CD8-positive, alpha-beta T cell (primary cell): ENCODE measurements at regions of chr14 and their contacts with region 1.

Region 1: DNA sequence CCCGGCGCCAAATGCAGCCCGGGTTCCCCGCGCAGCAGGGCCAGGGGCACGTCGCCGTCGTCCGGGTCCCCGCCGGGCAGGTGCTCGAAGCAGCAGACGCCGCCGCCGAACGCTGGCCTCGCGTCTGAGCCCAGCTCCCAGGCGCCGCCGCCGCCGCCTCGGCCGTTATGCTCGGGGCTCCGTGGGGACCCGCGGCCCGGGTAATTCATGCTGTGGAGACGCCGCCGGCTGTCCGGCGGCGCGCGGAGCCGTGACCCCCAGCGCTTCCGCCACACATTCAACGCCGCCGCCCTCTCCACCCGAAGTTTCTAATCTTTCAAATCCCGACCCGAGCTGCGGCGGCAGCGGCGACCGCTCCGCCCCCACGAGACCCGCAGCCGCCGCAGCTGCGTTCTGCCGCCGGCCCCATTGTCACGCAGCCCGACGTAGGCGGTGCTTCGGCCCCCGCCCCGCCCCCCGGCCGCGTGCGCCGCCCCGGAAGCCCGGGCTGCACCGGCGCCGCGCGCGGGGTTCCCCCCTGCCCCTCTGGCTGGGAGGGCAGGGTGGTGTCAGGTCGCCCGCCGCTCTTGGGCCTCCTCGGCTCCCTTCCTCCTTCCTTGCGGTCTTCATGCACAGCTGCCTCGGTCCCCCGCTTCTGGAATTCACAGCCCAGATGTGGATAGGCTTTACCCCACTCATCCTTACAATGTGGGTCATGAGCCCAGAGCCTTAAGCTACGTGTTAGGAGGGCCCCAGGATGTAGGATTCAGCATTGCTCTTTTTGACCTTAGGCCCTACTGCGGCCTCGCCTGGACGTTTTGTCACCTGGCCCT is at the start of gene DDHD1:
- DNase-seq: peak; percentile 73 to 93 (median 85)
- ATAC-seq: peak; percentile 85
- H3K4me3 ChIP-seq: peak within 1 kb of the TSS; percentile 86 to 93
- H3K4me3 Mint-ChIP-seq: peak within 1 kb of the TSS; percentile 99
- H3K27ac ChIP-seq: peak within 1 kb of the TSS; percentile 77 to 85
- H3K27ac Mint-ChIP-seq: peak within 1 kb of the TSS; percentile 99
- H3K4me1 ChIP-seq: peaks cover 33% of the 10 kb centered on the region
- H3K4me1 Mint-ChIP-seq: peaks cover 49% of the 10 kb centered on the region
- H3K27me3 ChIP-seq: no peaks in the 10 kb centered on the region
- H3K27me3 Mint-ChIP-seq: no peaks in the 10 kb centered on the region
- CTCF ChIP-seq: no peak
- total RNA-seq, gene DDHD1: 40.1 to 44.3 TPM

Region 2: GRCh38 chr14:52706724-52707706 is 446.1 kb before region 1 on chr14 and contains the start of gene PSMC6:
- CTCF ChIA-PET with region 1: no interaction called
- POLR2A ChIA-PET with region 1: no interaction called
- intact Hi-C with region 1: loop called in 1 of 2 experiments (anchors 10 kb)
- DNase-seq: peak; percentile 91 to 96 (median 95)
- ATAC-seq: peak; percentile 98
- H3K4me3 ChIP-seq: peak within 1 kb of the TSS; percentile 69 to 88
- H3K4me3 Mint-ChIP-seq: peak within 1 kb of the TSS; percentile 96
- H3K27ac ChIP-seq: peak within 1 kb of the TSS; percentile 66 to 84
- H3K27ac Mint-ChIP-seq: peak within 1 kb of the TSS; percentile 94
- H3K4me1 ChIP-seq: peaks cover 20% of the 10 kb centered on the region
- H3K4me1 Mint-ChIP-seq: peaks cover 33% of the 10 kb centered on the region
- H3K27me3 ChIP-seq: no peaks in the 10 kb centered on the region
- H3K27me3 Mint-ChIP-seq: no peaks in the 10 kb centered on the region
- CTCF ChIP-seq: no peak
- total RNA-seq, gene PSMC6: 108 to 122 TPM

Region 3: DNA sequence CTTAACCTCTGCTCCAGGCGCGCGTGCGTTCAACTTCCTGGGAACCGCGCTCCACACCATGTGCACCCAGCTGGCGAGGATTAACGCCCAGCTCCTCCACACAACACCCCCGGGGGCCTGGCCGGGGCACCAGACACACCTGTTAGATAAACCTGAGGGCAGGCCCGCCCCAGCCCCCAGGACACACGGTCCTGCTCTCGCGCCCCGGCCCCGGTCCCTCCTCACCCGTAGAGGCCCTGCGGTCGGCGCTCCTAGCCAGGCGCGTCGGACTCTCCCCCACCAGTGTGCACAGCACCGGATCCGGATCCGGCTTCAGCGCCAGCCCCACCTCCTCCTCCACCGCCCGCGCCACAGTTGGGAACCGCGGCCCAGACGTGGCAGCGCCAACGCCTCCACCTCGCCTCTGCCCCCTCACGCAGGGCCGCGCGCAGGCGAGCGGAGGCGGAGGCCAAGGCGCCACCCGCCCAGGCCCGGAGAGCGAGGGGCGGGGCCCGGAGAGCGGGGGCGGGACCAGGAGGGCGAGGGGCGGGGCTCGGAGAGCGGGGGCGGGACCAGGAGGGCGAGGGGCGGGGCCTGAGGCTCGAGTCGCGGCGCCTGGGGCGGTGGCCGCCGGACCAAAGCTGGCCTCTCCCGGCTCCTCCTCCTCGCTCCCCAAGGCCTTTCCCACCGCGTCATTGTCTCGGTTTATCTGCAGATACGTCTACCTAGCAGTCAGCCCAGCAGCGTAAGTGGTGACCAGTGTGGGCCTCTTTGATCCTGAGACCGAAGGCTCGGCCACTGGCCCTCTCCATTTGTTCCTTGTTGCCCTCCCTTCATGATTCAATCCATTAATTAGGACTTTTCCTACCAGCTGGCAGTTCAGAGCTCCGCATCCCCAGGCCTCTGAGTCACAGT is 361.6 kb before region 1 on chr14 and contains the start of gene GNPNAT1:
- CTCF ChIA-PET with region 1: no interaction called
- POLR2A ChIA-PET with region 1: no interaction called
- intact Hi-C with region 1: loop called (anchors 1 to 2 kb)
- DNase-seq: peak; percentile 80 to 97 (median 88)
- ATAC-seq: peak; percentile 96
- H3K4me3 ChIP-seq: peak within 1 kb of the TSS; percentile 78 to 85
- H3K4me3 Mint-ChIP-seq: peak within 1 kb of the TSS; percentile 93
- H3K27ac ChIP-seq: peak within 1 kb of the TSS; percentile 65 to 74
- H3K27ac Mint-ChIP-seq: peak within 1 kb of the TSS; percentile 89
- H3K4me1 ChIP-seq: peaks cover 20% of the 10 kb centered on the region
- H3K4me1 Mint-ChIP-seq: peaks cover 40% of the 10 kb centered on the region
- H3K27me3 ChIP-seq: no peaks in the 10 kb centered on the region
- H3K27me3 Mint-ChIP-seq: no peaks in the 10 kb centered on the region
- CTCF ChIP-seq: no peak
- total RNA-seq, gene GNPNAT1: 5.6 to 7.5 TPM

Region 4: GRCh38 chr14:53055003-53055402 is 98.1 kb before region 1 on chr14:
- CTCF ChIA-PET with region 1: interaction called, 14 read pairs
- POLR2A ChIA-PET with region 1: interaction called, 4 read pairs
- intact Hi-C with region 1: loop called in 1 of 2 experiments (anchors 5 kb)
- DNase-seq: peak in 2 of 9 experiments; percentile 48 to 60
- ATAC-seq: peak; percentile 55
- H3K4me3 ChIP-seq: no peak overlapping the region
- H3K4me3 Mint-ChIP-seq: no peak overlapping the region
- H3K27ac ChIP-seq: no peak overlapping the region
- H3K27ac Mint-ChIP-seq: peak overlapping the region; percentile 34
- H3K4me1 ChIP-seq: no peaks in the 10 kb centered on the region
- H3K4me1 Mint-ChIP-seq: no peaks in the 10 kb centered on the region
- H3K27me3 ChIP-seq: no peaks in the 10 kb centered on the region
- H3K27me3 Mint-ChIP-seq: no peaks in the 10 kb centered on the region
- CTCF ChIP-seq: peak; percentile 82

Region 5: GRCh38 chr14:53137568-53138203 is 15.4 kb before region 1 on chr14:
- CTCF ChIA-PET with region 1: interaction called, 3 read pairs
- POLR2A ChIA-PET with region 1: interaction called, 5 read pairs
- intact Hi-C with region 1: loop called in 1 of 2 experiments (anchors 2 kb)
- DNase-seq: no peak
- ATAC-seq: no peak
- H3K4me3 ChIP-seq: no peak overlapping the region
- H3K4me3 Mint-ChIP-seq: no peak overlapping the region
- H3K27ac ChIP-seq: no peak overlapping the region
- H3K27ac Mint-ChIP-seq: no peak overlapping the region
- H3K4me1 ChIP-seq: no peaks in the 10 kb centered on the region
- H3K4me1 Mint-ChIP-seq: peaks cover 34% of the 10 kb centered on the region
- H3K27me3 ChIP-seq: no peaks in the 10 kb centered on the region
- H3K27me3 Mint-ChIP-seq: no peaks in the 10 kb centered on the region
- CTCF ChIP-seq: no peak

Region 6: DNA sequence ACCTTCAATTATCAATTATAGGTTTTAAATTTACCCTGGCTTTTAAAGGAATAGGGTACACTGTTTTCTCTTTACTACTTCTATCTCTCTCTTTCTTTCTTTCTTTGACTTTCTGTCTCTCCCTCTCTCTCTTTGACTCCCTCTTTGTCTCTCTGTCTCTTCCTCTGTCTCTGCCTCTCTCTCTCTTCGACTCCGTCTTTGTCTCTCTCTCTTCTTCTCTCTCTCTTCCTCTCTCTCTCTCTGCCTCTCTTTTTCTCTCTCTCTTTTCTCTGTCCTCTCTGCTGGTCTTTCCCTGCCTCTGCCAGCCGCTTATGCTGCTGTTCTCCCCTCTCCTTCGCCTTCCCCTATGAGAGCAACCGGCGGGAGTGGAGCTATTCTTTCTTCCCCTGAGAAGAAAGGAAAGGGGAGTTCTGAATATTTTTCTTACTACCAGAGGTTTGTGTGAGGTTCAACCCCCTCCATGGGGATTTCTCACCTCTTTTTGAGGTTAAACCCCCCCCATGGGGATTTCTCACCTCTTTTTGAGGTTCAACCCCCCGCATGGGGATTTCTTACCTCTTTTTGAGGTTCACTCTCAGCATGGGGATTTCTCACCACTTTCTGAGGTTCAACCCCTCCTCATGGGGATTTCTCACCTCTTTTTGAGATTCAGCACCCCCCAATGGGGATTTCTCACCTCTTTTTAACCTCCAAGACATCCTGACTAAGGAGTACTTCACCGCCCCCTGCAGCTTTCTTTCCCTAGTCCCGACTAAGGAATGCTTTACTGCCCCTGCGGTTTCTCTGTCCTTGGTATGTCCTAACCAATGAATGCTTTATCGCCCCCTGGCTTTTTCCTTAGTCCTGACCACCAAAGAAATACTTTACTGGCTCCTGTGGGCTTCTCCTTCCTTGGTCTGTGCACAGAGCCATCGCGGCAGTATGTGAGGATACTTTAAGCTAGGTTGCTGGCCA is 27.4 kb after region 1 on chr14:
- CTCF ChIA-PET with region 1: no interaction called
- POLR2A ChIA-PET with region 1: no interaction called
- intact Hi-C with region 1: no loop called
- DNase-seq: peak in 4 of 9 experiments; percentile 13 to 82 (median 54)
- ATAC-seq: peak; percentile 49
- H3K4me3 ChIP-seq: no peak overlapping the region
- H3K4me3 Mint-ChIP-seq: no peak overlapping the region
- H3K27ac ChIP-seq: no peak overlapping the region
- H3K27ac Mint-ChIP-seq: peak overlapping the region; percentile 19
- H3K4me1 ChIP-seq: no peaks in the 10 kb centered on the region
- H3K4me1 Mint-ChIP-seq: peaks cover 6% of the 10 kb centered on the region
- H3K27me3 ChIP-seq: no peaks in the 10 kb centered on the region
- H3K27me3 Mint-ChIP-seq: no peaks in the 10 kb centered on the region
- CTCF ChIP-seq: no peak